Activated CD8-positive, alpha-beta memory T cell treated with anti-CD3 and anti-CD28 coated beads, Interleukin-2, amount 10 ng/mL, durations not matched to agents 7 days and 5 days (primary cell): ENCODE measurements at regions of chr6 and their contacts with region 1.

Region 1: GRCh38 chr6:36423101-36423824 is 19.4 kb downstream of the PXT1 start:
- DNase-seq: peak; percentile 99
- ATAC-seq: peak; percentile 98
- H3K4me3 Mint-ChIP-seq: peak overlapping the region; percentile 79
- H3K27ac Mint-ChIP-seq: peak overlapping the region; percentile 86
- H3K4me1 Mint-ChIP-seq: peaks cover 18% of the 10 kb centered on the region
- H3K27me3 Mint-ChIP-seq: no peaks in the 10 kb centered on the region

Region 2: GRCh38 chr6:36312854-36313648 is 110.2 kb before region 1 on chr6:
- CTCF ChIA-PET with region 1: no interaction called
- DNase-seq: no peak
- ATAC-seq: no peak
- H3K4me3 Mint-ChIP-seq: no peak overlapping the region
- H3K27ac Mint-ChIP-seq: no peak overlapping the region
- H3K4me1 Mint-ChIP-seq: peaks cover 8% of the 10 kb centered on the region
- H3K27me3 Mint-ChIP-seq: peaks cover 20% of the 10 kb centered on the region

Region 3: GRCh38 chr6:36386495-36387439 is 36.5 kb before region 1 on chr6:
- CTCF ChIA-PET with region 1: interaction called, 12 read pairs
- DNase-seq: no peak
- ATAC-seq: peak; percentile 25
- H3K4me3 Mint-ChIP-seq: peak overlapping the region; percentile 95
- H3K27ac Mint-ChIP-seq: peak overlapping the region; percentile 88
- H3K4me1 Mint-ChIP-seq: peaks cover 48% of the 10 kb centered on the region
- H3K27me3 Mint-ChIP-seq: peaks cover 21% of the 10 kb centered on the region

Region 4: GRCh38 chr6:36441307-36441894 is 18.1 kb after region 1 on chr6:
- CTCF ChIA-PET with region 1: interaction called, 24 read pairs
- DNase-seq: peak; percentile 94
- ATAC-seq: peak; percentile 82
- H3K4me3 Mint-ChIP-seq: peak overlapping the region; percentile 56
- H3K27ac Mint-ChIP-seq: peak overlapping the region; percentile 84
- H3K4me1 Mint-ChIP-seq: peaks cover 37% of the 10 kb centered on the region
- H3K27me3 Mint-ChIP-seq: no peaks in the 10 kb centered on the region

Region 5: DNA sequence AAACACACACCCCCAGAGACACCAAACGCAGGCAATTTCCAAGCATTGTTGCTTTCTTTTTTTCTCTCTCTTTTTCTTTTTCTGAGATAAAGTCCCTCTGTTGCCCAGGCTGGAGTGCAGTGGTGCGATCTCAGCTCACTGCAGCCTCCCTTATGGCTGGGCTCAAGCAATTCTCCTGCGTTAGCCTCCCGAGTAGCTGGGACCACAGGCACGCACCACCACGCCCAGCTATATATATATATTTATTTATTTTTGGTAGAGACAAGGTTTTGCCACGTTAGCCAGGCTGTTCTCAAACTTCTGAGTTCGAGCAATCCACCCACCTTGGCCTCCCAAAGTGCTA is 156.9 kb after region 1 on chr6:
- CTCF ChIA-PET with region 1: interaction called, 11 read pairs
- DNase-seq: no peak
- ATAC-seq: no peak
- H3K4me3 Mint-ChIP-seq: no peak overlapping the region
- H3K27ac Mint-ChIP-seq: no peak overlapping the region
- H3K4me1 Mint-ChIP-seq: peaks cover 7% of the 10 kb centered on the region
- H3K27me3 Mint-ChIP-seq: no peaks in the 10 kb centered on the region

Region 6: GRCh38 chr6:36594029-36594815 is 171.0 kb after region 1 on chr6 and contains the start of gene SRSF3:
- CTCF ChIA-PET with region 1: interaction called, 15 read pairs
- DNase-seq: peak; percentile 98
- ATAC-seq: peak; percentile 91
- H3K4me3 Mint-ChIP-seq: peak within 1 kb of the TSS; percentile 98
- H3K27ac Mint-ChIP-seq: peak within 1 kb of the TSS; percentile 100
- H3K4me1 Mint-ChIP-seq: peaks cover 41% of the 10 kb centered on the region
- H3K27me3 Mint-ChIP-seq: peaks cover 2% of the 10 kb centered on the region
- total RNA-seq, gene SRSF3: 416 to 514 TPM

Region 7: GRCh38 chr6:36793913-36794712 is 370.9 kb after region 1 on chr6:
- CTCF ChIA-PET with region 1: no interaction called
- DNase-seq: no peak
- ATAC-seq: no peak
- H3K4me3 Mint-ChIP-seq: no peak overlapping the region
- H3K27ac Mint-ChIP-seq: no peak overlapping the region
- H3K4me1 Mint-ChIP-seq: no peaks in the 10 kb centered on the region
- H3K27me3 Mint-ChIP-seq: peaks cover 24% of the 10 kb centered on the region